GM12878 (cell line): ENCODE measurements at regions of chr2 and their contacts with region 1.

Region 1: GRCh38 chr2:102473020-102473419 is at the start of gene SLC9A4:
- DNase-seq: no peak
- ATAC-seq: peak; percentile 77
- H3K4me3 ChIP-seq: no peak within 1 kb of the TSS
- H3K27ac ChIP-seq: no peak within 1 kb of the TSS
- H3K4me1 ChIP-seq: no peaks in the 10 kb centered on the region
- H3K27me3 ChIP-seq: peaks cover 0 to 2% of the 10 kb centered on the region in 2 experiments; a peak in 1 of 4 replicates
- CTCF ChIP-seq: peak; percentile 78 to 89 (median 88)
- EP300 ChIP-seq: no peak
- POLR2A ChIP-seq: no peak
- RAD21 ChIP-seq: peak; percentile 70
- polyA plus RNA-seq, gene SLC9A4: not detected

Region 2: GRCh38 chr2:102224824-102225739 is 247.9 kb before region 1 on chr2:
- CTCF ChIA-PET with region 1: no interaction called
- POLR2A ChIA-PET with region 1: no interaction called
- RAD21 ChIA-PET with region 1: no interaction called
- SMC1A ChIA-PET with region 1: no interaction called
- in situ Hi-C with region 1: no loop called
- intact Hi-C with region 1: no loop called
- DNase-seq: no peak
- ATAC-seq: no peak
- H3K4me3 ChIP-seq: no peak overlapping the region
- H3K27ac ChIP-seq: no peak overlapping the region
- H3K4me1 ChIP-seq: no peaks in the 10 kb centered on the region; the same call in 1 of the 2 replicates
- H3K27me3 ChIP-seq: no peaks in the 10 kb centered on the region
- CTCF ChIP-seq: no peak
- EP300 ChIP-seq: no peak
- POLR2A ChIP-seq: no peak
- RAD21 ChIP-seq: no peak

Region 3: DNA sequence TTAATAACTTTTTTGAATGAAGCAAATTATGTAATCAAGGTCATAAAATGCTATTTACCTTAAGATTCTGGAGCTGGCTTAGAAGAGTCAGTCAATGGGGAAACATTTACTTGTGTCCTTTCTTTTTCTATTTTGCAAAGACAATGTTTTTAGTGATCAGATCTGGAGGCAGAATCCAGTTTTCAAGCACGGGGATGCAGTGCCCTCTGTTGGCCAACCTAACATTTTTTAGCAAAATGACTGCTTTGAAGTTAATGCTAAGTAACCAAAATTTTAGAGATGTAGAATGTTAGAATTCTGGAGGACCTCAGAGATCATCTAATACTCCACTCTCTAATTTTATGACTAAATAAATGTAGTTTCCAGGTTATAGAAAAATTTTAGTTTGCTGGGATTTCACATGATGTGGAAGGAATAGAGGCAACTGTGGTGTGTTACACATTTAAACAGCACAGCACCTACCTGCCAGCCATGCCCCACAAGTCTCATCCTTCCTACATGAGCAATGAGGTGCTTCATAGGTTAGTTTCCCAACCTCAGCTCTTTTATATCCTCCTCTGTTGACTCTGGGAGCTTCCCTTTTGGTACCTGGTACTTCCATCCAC is 23.5 kb before region 1 on chr2:
- CTCF ChIA-PET with region 1: interaction called, 6 read pairs
- POLR2A ChIA-PET with region 1: interaction called, 4 read pairs
- RAD21 ChIA-PET with region 1: no interaction called
- SMC1A ChIA-PET with region 1: no interaction called
- in situ Hi-C with region 1: no loop called
- intact Hi-C with region 1: loop called (anchors 2 kb)
- DNase-seq: no peak
- ATAC-seq: peak; percentile 78
- H3K4me3 ChIP-seq: no peak overlapping the region
- H3K27ac ChIP-seq: no peak overlapping the region
- H3K4me1 ChIP-seq: no peaks in the 10 kb centered on the region
- H3K27me3 ChIP-seq: no peaks in the 10 kb centered on the region
- CTCF ChIP-seq: peak; percentile 49 to 79 (median 58); a peak in 5 of 6 replicates
- EP300 ChIP-seq: no peak
- POLR2A ChIP-seq: no peak
- RAD21 ChIP-seq: peak; percentile 87

Region 4: GRCh38 chr2:102485147-102485785 is 12.2 kb after region 1 on chr2:
- CTCF ChIA-PET with region 1: interaction called, 30 read pairs
- POLR2A ChIA-PET with region 1: interaction called, 3 read pairs
- RAD21 ChIA-PET with region 1: no interaction called
- SMC1A ChIA-PET with region 1: interaction called, 3 read pairs
- in situ Hi-C with region 1: no loop called
- intact Hi-C with region 1: no loop called
- DNase-seq: no peak
- ATAC-seq: no peak
- H3K4me3 ChIP-seq: no peak overlapping the region
- H3K27ac ChIP-seq: no peak overlapping the region
- H3K4me1 ChIP-seq: no peaks in the 10 kb centered on the region
- H3K27me3 ChIP-seq: no peaks in the 10 kb centered on the region; a peak in 3 of 4 replicates
- CTCF ChIP-seq: no peak
- EP300 ChIP-seq: no peak
- POLR2A ChIP-seq: no peak
- RAD21 ChIP-seq: no peak

Region 5: GRCh38 chr2:102592597-102592996 is 119.6 kb after region 1 on chr2:
- CTCF ChIA-PET with region 1: no interaction called
- POLR2A ChIA-PET with region 1: no interaction called
- RAD21 ChIA-PET with region 1: no interaction called
- SMC1A ChIA-PET with region 1: interaction called, 3 read pairs
- in situ Hi-C with region 1: no loop called
- intact Hi-C with region 1: loop called (anchors 1 kb)
- DNase-seq: no peak
- ATAC-seq: no peak
- H3K4me3 ChIP-seq: no peak overlapping the region
- H3K27ac ChIP-seq: no peak overlapping the region
- H3K4me1 ChIP-seq: no peaks in the 10 kb centered on the region
- H3K27me3 ChIP-seq: no peaks in the 10 kb centered on the region
- CTCF ChIP-seq: peak in 2 of 3 experiments; percentile 27 to 36; a peak in 2 of 6 replicates
- EP300 ChIP-seq: no peak
- POLR2A ChIP-seq: no peak
- RAD21 ChIP-seq: 0 out of 2 replicates have a peak, but pooled peaks have one; percentile 21

Region 6: GRCh38 chr2:102703748-102704147 is 230.7 kb after region 1 on chr2:
- CTCF ChIA-PET with region 1: interaction called, 9 read pairs
- POLR2A ChIA-PET with region 1: no interaction called
- RAD21 ChIA-PET with region 1: interaction called, 5 read pairs
- SMC1A ChIA-PET with region 1: interaction called, 11 read pairs
- in situ Hi-C with region 1: no loop called
- intact Hi-C with region 1: loop called (anchors 5 kb)
- DNase-seq: no peak
- ATAC-seq: peak; percentile 77
- H3K4me3 ChIP-seq: no peak overlapping the region
- H3K27ac ChIP-seq: no peak overlapping the region
- H3K4me1 ChIP-seq: no peaks in the 10 kb centered on the region
- H3K27me3 ChIP-seq: no peaks in the 10 kb centered on the region
- CTCF ChIP-seq: peak; percentile 20 to 53 (median 30); a peak in 3 of 6 replicates
- EP300 ChIP-seq: no peak
- POLR2A ChIP-seq: no peak
- RAD21 ChIP-seq: peak; percentile 59